Gastrocnemius medialis (tissue), 4 donors: ENCODE measurements at regions of chr10 and their contacts with region 1.

Region 1: GRCh38 chr10:33801748-33802147 is 467.3 kb upstream of the NRP1 start:
- DNase-seq: peak; percentile 56 to 78
- ATAC-seq: peak; percentile 87 to 91
- H3K4me3 ChIP-seq: no peak overlapping the region
- H3K27ac ChIP-seq: peak overlapping the region; percentile 86 to 95 (median 92)
- H3K4me1 ChIP-seq: peaks cover 23 to 38% of the 10 kb centered on the region in 2 donors
- H3K27me3 ChIP-seq: no peaks in the 10 kb centered on the region
- CTCF ChIP-seq: no peak
- POLR2A ChIP-seq: no peak

Region 2: DNA sequence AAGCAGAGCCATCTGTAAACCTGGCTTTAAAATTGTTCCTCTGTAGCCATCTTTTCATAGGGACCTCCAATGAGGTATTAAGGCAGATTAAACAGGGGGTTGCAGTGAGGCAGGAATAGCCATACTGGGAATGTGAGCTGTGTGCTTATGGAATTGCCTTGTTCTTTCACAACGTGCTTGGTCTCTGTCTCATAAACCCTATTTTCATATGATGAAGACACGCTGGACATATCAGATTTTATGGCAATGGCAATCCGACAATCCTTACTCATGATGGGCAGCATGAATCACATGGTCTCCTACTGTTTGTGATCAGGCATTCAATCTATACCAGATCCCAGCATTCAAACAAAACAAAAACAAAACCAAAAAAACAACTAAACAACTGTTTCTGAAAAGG is 48.4 kb before region 1 on chr10:
- in situ Hi-C with region 1: no loop called
- intact Hi-C with region 1: loop called (anchors 2 kb)
- DNase-seq: peak; percentile 10 to 33
- ATAC-seq: peak; percentile 97
- H3K4me3 ChIP-seq: no peak overlapping the region
- H3K27ac ChIP-seq: peak overlapping the region in 3 of 4 donors; percentile 32 to 77 (median 69)
- H3K4me1 ChIP-seq: peaks cover 12 to 36% of the 10 kb centered on the region in 2 donors
- H3K27me3 ChIP-seq: no peaks in the 10 kb centered on the region
- CTCF ChIP-seq: no peak
- POLR2A ChIP-seq: no peak

Region 3: DNA sequence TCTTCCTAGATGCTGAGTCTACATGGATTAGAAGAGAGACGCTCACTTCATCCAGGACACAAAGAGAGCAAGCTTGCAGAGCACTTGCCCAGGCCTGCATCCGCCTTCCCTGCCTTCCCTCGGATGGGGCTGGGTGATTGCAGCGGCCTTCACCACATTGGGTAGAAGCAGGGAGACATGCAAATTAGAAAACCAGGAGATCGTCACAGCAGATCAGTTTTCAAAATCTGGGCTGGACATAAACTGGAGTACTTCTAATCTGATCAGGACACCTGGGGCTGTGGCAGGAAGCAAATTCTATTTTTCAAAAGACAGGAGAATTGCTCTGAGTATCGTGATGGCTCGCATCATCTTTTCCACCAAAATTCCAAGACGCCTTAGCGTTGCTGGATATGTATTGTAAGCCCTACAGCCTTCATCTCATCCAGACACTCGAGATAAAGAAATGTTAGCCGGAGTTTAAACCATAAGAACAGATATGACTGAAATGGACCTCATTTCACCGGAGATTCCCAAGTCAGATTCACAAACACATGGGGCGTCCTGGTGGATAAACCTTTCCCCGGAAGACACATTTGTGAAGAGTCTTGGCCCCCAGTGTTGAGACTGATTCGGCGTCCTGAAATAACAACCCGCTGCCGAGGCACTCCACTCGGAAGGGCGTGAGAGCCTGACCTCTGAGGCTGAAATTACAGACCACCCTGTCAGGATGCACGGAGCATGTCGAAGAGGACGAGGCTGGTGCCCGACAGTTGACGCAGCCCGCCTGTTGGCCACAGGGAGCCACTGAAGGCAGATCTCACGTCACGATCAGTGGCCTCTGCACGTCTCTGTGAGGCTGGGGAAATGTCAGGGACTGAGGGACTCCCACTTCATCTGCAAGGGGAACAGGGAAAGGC is 1104.6 kb after region 1 on chr10:
- in situ Hi-C with region 1: no loop called
- intact Hi-C with region 1: no loop called
- DNase-seq: peak in 1 of 2 donors; percentile 18
- ATAC-seq: peak; percentile 81 to 92
- H3K4me3 ChIP-seq: peak overlapping the region; percentile 1 to 14 (median 8)
- H3K27ac ChIP-seq: peak overlapping the region in 3 of 4 donors; percentile 19 to 25 (median 24)
- H3K4me1 ChIP-seq: no peaks in the 10 kb centered on the region
- H3K27me3 ChIP-seq: no peaks in the 10 kb centered on the region
- CTCF ChIP-seq: no peak
- POLR2A ChIP-seq: no peak

Region 4: GRCh38 chr10:35642027-35642792 is 1840.5 kb after region 1 on chr10 and contains the start of gene FZD8:
- in situ Hi-C with region 1: no loop called
- intact Hi-C with region 1: loop called (anchors 5 kb)
- DNase-seq: peak; percentile 84 to 89
- ATAC-seq: peak; percentile 77 to 80
- H3K4me3 ChIP-seq: peak within 1 kb of the TSS; percentile 73 to 88 (median 80)
- H3K27ac ChIP-seq: peak within 1 kb of the TSS; percentile 81 to 95 (median 89)
- H3K4me1 ChIP-seq: peaks cover 4 to 17% of the 10 kb centered on the region in 2 donors
- H3K27me3 ChIP-seq: no peaks in the 10 kb centered on the region
- CTCF ChIP-seq: peak in 3 of 5 experiments; percentile 5 to 39 (median 9)
- POLR2A ChIP-seq: peak; percentile 93 to 98
- total RNA-seq, gene FZD8: 3.0 to 9.3 (median 4.1) TPM